Mammary epithelial cell (primary cell): ENCODE measurements at regions of chr17 and their contacts with region 1.

Region 1: DNA sequence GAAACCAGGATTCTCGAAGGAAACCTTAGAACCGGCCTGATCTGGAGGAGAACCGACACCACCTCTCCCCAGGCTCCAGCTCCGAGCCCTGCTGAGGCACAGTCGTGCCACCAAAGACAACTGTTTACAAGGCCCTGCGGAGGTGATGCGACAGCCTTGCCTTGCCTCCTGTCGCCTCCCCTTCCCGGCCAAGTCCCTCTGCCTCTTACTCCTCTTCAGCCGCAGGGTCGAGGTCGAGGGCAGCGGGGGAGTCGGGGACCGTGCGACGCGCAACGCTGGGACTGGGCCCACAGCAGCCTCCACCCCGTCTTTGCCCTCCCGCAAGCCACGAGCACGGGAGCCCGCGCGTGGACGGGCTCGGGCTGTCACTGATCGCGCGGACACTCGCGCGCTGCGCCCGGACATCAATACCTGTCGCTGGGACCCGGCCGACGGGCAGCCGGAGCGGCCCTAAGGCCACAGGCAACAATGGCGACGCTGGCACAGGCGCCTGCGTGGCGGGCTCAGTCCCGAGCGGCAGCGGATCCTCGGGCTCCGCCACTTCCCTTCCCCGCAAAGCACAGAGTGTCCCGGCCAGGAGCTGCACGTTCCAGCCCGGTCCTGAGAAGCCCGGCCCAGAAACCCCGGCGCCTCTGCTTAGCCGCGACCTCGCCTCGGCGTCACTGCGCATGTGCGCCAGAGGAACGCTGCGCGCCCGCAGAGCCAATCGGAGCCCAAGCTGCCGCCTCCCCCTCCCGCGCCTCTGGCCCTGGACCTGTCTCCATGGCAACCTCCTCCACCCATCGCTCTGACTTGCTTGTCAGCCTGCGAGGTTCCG is at the start of gene ZNF287:
- DNase-seq: peak; percentile 81
- H3K4me3 ChIP-seq: peak within 1 kb of the TSS; percentile 55 to 77 (median 77)
- H3K27ac ChIP-seq: no peak within 1 kb of the TSS
- H3K4me1 ChIP-seq: peaks cover 6% of the 10 kb centered on the region
- H3K27me3 ChIP-seq: no peaks in the 10 kb centered on the region
- CTCF ChIP-seq: no peak
- total RNA-seq, gene ZNF287: 6.6 to 6.7 TPM

Region 2: DNA sequence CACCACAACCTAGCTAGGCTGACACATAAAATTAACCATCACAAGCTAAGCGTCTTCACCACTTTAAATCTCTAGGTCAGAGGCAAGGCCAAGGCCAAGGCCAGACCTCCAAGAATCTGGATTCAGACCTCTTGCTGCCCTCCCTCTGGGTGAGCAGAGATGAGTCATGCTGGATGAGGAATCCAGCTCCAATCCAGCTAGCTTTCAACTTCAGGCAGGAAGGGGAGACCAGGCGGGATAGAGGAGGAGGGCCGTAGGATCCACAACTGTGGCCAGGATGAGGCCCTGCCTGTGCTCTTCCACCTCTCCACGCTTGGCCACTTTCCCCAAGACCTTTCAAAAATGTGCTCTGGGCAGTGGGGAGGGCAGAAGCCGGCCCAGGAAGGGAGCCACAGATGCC is 91.5 kb before region 1 on chr17:
- CTCF ChIA-PET with region 1: no interaction called
- dilution Hi-C with region 1: loop called (anchors 5 kb)
- in situ Hi-C with region 1: no loop called
- intact Hi-C with region 1: no loop called
- DNase-seq: peak; percentile 35
- H3K4me3 ChIP-seq: no peak overlapping the region
- H3K27ac ChIP-seq: no peak overlapping the region
- H3K4me1 ChIP-seq: no peaks in the 10 kb centered on the region
- H3K27me3 ChIP-seq: peaks cover 2% of the 10 kb centered on the region
- CTCF ChIP-seq: no peak

Region 3: DNA sequence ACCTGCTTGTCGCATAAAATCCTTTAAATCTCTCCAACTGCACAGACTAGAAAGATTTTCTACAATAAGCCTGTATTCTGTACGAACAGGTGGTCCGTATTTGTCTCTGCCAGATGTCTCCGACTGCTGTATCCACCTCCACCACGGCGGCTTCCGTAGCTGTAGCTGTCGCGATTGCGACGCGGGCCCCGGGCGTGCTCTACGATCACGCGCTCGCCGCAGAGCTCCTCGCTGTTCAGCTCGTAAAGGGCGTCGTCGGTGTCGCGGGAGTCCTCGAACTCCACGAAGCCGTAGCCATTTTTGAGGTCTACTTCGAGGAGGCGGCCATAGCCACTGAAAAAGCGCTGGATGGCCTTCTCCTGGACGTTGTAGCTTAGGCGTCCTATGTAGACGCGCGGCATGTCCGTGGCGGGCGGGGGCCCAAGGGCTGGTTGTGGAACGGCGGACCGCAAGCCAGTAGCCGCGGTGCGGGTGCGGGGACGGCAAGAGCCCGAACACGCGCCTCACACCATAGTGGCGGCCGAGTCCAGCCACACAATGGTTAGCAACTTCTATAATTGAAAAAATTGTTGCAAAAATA is 48.8 kb after region 1 on chr17:
- CTCF ChIA-PET with region 1: no interaction called
- dilution Hi-C with region 1: no loop called
- in situ Hi-C with region 1: no loop called
- intact Hi-C with region 1: no loop called
- DNase-seq: no peak
- H3K4me3 ChIP-seq: no peak overlapping the region
- H3K27ac ChIP-seq: no peak overlapping the region
- H3K4me1 ChIP-seq: no peaks in the 10 kb centered on the region
- H3K27me3 ChIP-seq: no peaks in the 10 kb centered on the region
- CTCF ChIP-seq: no peak